ENCODE measurements at regions of chr1 and their contacts with region 1.

Region 1: GRCh38 chr1:113904674-113905434 is at the starts of genes AP4B1 and DCLRE1B:
- DNase-seq: peak; percentile 99
- H3K4me3 ChIP-seq: peak within 1 kb of the TSS; percentile 51
- H3K27me3 ChIP-seq: no peaks in the 10 kb centered on the region
- CTCF ChIP-seq: peak; percentile 80
- polyA plus RNA-seq, gene AP4B1: 9.5 and 13.2 TPM in 2 replicates
- polyA plus RNA-seq, gene DCLRE1B: 3.4 and 4.5 TPM in 2 replicates

Region 2: DNA sequence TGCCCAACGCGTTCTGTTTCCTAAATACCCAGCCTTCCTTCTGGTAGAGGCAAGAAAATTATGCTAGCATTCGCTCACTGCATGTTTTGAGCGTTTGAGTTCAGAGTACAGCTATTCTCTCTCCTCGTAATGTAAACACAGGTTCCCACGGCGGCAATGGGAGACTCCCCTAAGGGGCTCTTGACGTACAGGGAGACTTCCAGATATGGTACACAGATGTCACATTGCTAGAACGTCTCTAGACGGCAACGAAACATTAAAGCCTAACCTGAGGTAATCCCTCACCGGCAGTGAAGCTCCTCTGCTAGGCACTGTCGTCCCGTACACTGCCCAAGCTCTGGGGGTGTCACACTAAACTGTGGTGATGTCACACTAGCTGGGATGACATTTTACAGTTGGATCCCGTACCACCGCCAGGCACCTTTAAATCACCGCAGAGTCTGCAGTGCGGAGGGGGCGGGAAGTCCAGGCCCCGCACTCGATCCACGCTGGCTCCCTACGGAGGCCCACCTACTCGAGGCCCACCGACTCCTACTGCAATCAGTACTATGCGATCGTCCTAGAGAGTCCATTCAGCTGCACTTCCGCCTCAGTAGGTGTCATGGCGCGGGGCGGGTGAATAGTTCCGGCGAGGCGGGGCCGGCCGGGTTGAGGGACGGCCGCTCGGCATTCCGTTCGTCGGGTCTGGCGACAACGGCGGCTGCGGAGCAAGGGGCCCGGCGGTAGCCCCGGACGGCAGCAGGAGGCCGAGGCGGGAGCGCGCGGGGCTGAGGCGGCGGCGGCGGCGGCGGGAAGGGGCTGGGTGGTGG is 24.3 kb after region 1 on chr1 and contains the start of gene HIPK1:
- CTCF ChIA-PET with region 1: interaction called, 17 read pairs
- POLR2A ChIA-PET with region 1: interaction called, 5 read pairs
- DNase-seq: no peak
- H3K4me3 ChIP-seq: peak within 1 kb of the TSS; percentile 70
- H3K27me3 ChIP-seq: no peaks in the 10 kb centered on the region
- CTCF ChIP-seq: no peak
- polyA plus RNA-seq, gene HIPK1: 27.6 and 29.7 TPM in 2 replicates

Measured in BJ (cell line).